PC-9 (cell line): ENCODE measurements at regions of chr7 and their contacts with region 1.

Region 1: DNA sequence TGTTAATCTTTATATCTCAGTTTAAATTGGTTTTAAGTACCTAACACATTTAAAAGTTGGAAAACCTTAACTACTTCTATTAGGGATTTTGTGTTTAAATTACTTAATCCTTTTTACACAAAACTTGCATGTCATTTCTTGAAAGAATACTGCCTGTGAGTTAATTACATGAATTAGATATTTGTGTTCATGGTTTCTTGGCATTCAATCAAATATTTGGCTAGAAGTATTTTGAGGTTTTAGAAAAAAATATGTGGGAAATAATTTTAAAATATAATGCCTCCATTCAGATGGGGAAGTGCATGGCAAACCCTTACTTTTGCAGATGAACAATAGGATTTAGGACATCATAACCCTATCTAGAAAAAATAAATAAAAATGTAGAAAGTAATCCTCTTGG is 186.5 kb upstream of the SEMA3E start:
- DNase-seq: no peak
- H3K4me3 ChIP-seq: no peak overlapping the region
- H3K27ac ChIP-seq: no peak overlapping the region
- H3K4me1 ChIP-seq: no peaks in the 10 kb centered on the region
- H3K27me3 ChIP-seq: no peaks in the 10 kb centered on the region
- CTCF ChIP-seq: no peak

Region 2: DNA sequence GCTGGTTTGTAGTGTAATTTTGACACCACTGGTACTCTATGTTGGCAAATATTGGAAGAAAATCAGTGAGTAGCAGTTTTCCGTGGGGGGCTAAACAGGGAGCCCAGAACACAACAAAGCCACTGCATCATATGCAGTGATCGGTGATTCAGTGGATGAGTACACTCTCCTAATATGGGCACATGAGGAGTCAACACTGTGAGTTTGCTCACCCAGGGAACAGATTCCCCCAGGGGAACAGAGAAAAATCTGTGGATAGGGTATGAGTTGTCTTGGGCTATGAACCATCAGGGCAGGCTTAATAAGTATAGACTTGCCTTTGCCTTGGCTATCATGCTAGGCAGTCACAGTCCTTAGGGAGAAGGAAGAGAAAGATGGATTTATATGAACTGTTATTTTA is 41.2 kb after region 1 on chr7:
- CTCF ChIA-PET with region 1: no interaction called
- POLR2A ChIA-PET with region 1: interaction called, 10 read pairs
- intact Hi-C with region 1: no loop called
- DNase-seq: no peak
- H3K4me3 ChIP-seq: no peak overlapping the region
- H3K27ac ChIP-seq: no peak overlapping the region
- H3K4me1 ChIP-seq: no peaks in the 10 kb centered on the region
- H3K27me3 ChIP-seq: no peaks in the 10 kb centered on the region
- CTCF ChIP-seq: no peak

Region 3: GRCh38 chr7:84060760-84061261 is 225.4 kb after region 1 on chr7:
- CTCF ChIA-PET with region 1: no interaction called
- POLR2A ChIA-PET with region 1: no interaction called
- intact Hi-C with region 1: no loop called
- DNase-seq: peak in 1 of 2 experiments; percentile 74
- H3K4me3 ChIP-seq: no peak overlapping the region
- H3K27ac ChIP-seq: peak overlapping the region; percentile 51
- H3K4me1 ChIP-seq: peaks cover 27% of the 10 kb centered on the region
- H3K27me3 ChIP-seq: no peaks in the 10 kb centered on the region
- CTCF ChIP-seq: no peak